Endothelial cell of umbilical vein (primary cell): ENCODE measurements at regions of chr11 and their contacts with region 1.

Region 1: GRCh38 chr11:113994077-113994954 is 19.4 kb downstream of the HTR3A start:
- DNase-seq: peak; percentile 11
- H3K4me3 ChIP-seq: no peak overlapping the region
- H3K27ac ChIP-seq: no peak overlapping the region
- H3K4me1 ChIP-seq: no peaks in the 10 kb centered on the region
- H3K27me3 ChIP-seq: peaks cover 2 to 4% of the 10 kb centered on the region in 2 experiments
- CTCF ChIP-seq: peak; percentile 50 to 69
- POLR2A ChIP-seq: no peak

Region 2: GRCh38 chr11:113806406-113806805 is 187.9 kb before region 1 on chr11:
- CTCF ChIA-PET with region 1: no interaction called
- POLR2A ChIA-PET with region 1: no interaction called
- dilution Hi-C with region 1: no loop called
- intact Hi-C with region 1: loop called (anchors 2 kb)
- DNase-seq: peak; percentile 30
- H3K4me3 ChIP-seq: no peak overlapping the region
- H3K27ac ChIP-seq: no peak overlapping the region
- H3K4me1 ChIP-seq: no peaks in the 10 kb centered on the region
- H3K27me3 ChIP-seq: no peaks in the 10 kb centered on the region
- CTCF ChIP-seq: peak; percentile 35 to 65
- POLR2A ChIP-seq: no peak

Region 3: DNA sequence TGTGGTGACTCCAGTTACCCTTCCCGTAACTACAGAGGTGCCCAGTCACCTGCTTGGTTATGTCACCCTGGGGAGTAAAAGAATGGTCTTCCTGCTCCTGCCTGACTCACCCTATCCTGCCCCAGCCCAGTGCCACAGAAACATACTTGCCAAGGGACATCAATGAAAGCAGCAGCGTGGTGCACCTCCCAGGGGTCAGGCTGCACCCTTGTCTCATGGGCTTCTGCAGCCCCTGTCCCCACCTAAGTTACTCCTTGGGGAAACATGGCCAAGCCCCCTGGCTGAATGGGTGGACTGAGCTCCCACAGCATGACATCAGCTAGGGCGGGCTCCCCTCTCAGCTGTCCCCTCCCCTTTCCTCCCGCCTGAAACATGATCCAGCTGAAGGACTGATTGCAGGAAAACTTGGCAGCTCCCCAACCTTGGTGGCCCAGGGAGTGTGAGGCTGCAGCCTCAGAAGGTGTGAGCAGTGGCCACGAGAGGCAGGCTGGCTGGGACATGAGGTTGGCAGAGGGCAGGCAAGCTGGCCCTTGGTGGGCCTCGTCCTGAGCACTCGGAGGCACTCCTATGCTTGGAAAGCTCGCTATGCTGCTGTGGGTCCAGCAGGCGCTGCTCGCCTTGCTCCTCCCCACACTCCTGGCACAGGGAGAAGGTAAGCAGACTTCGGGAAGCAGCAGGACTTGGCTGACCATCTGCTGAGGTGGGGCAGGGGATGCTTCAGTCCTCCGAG is 19.4 kb before region 1 on chr11 and contains the start of gene HTR3A:
- CTCF ChIA-PET with region 1: interaction called, 12 read pairs
- POLR2A ChIA-PET with region 1: no interaction called
- dilution Hi-C with region 1: no loop called
- intact Hi-C with region 1: no loop called
- DNase-seq: peak; percentile 57
- H3K4me3 ChIP-seq: no peak within 1 kb of the TSS
- H3K27ac ChIP-seq: no peak within 1 kb of the TSS
- H3K4me1 ChIP-seq: peaks cover 4% of the 10 kb centered on the region
- H3K27me3 ChIP-seq: peaks cover 8 to 9% of the 10 kb centered on the region in 2 experiments
- CTCF ChIP-seq: no peak
- POLR2A ChIP-seq: no peak
- total RNA-seq, gene HTR3A: not detected in 2 replicates

Region 4: DNA sequence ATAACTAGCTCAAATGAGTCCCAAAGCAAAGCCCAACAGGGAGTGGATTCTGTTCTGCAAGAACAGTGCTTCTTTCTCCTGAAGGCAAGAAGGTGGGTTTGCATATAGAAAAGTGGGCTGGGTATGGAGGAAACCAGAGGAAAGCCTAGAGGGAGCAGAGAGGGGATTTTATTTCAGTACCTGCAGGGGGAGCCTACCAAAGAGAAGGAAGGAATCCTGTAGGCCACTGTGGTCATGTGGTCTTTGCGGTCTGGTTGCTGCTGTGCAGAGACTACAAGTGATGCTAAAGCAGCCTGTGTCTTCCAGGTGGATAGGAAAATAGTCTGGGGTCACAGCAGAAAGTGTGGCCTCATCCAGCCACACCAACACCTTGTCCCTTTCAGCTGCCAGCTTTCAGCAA is 32.0 kb after region 1 on chr11:
- CTCF ChIA-PET with region 1: interaction called, 16 read pairs
- POLR2A ChIA-PET with region 1: no interaction called
- dilution Hi-C with region 1: no loop called
- intact Hi-C with region 1: no loop called
- DNase-seq: no peak
- H3K4me3 ChIP-seq: no peak overlapping the region
- H3K27ac ChIP-seq: no peak overlapping the region
- H3K4me1 ChIP-seq: no peaks in the 10 kb centered on the region
- H3K27me3 ChIP-seq: peaks cover 17 to 22% of the 10 kb centered on the region in 2 experiments
- CTCF ChIP-seq: peak in 1 of 2 donors; percentile 8
- POLR2A ChIP-seq: no peak

Region 5: DNA sequence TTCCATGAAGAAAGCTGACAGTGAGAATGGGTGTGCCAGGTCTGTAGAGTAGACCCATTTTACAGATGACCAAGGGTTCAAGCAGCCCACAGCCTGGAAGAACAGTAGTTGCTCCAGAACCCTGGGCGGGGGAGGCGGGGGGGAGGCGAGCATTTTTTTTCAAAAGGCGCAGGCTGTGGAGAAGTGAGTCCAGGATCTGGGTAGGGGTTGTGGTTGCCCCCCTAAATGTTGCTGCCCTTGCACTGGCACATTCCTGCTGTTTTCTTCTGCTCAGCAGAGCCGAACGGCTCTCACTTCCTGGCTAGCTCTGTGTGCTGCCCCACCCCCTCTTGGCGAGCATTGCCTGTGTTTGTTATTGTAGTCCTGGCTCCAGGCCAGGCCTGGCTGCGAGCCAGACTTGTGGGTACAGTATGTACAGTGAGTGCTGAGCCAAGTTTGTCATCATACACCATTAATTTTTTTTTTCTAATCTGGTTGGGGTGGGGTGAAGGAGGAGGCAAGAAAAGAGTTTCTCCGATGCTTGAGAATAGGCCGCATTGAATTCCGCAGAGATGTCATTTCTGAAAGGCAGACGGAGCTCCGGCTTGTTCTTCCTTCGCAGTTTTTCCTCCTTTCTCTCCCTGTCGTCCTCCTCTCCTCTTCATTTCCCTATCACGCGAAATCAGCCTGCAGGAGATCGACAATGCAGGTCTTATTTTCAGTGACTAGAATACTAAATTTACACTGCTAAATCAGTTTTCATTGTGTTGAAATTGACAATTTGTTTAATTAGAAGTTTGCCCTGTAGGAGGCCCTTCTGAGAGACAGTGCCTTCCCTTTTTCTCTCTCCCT is 165.7 kb after region 1 on chr11:
- CTCF ChIA-PET with region 1: no interaction called
- POLR2A ChIA-PET with region 1: no interaction called
- dilution Hi-C with region 1: no loop called
- intact Hi-C with region 1: no loop called
- DNase-seq: peak; percentile 99
- H3K4me3 ChIP-seq: peak overlapping the region in 1 of 3 experiments; percentile 6
- H3K27ac ChIP-seq: peak overlapping the region; percentile 91
- H3K4me1 ChIP-seq: peaks cover 54% of the 10 kb centered on the region
- H3K27me3 ChIP-seq: no peaks in the 10 kb centered on the region
- CTCF ChIP-seq: no peak
- POLR2A ChIP-seq: peak; percentile 73